Left cardiac atrium (tissue), 4 donors: ENCODE measurements at regions of chr10 and their contacts with region 1.

Region 1: GRCh38 chr10:60629332-60629731 is 148.9 kb upstream of the CDK1 start:
- DNase-seq: no peak
- ATAC-seq: no peak

Region 2: GRCh38 chr10:60549686-60550085 is 79.6 kb before region 1 on chr10:
- intact Hi-C with region 1: loop called in 1 of 2 experiments (anchors 10 kb)
- DNase-seq: no peak
- ATAC-seq: no peak

Region 3: GRCh38 chr10:60679388-60679990 is 50.2 kb after region 1 on chr10:
- intact Hi-C with region 1: no loop called
- DNase-seq: no peak
- ATAC-seq: no peak